ENCODE measurements at regions of chr15 and their contacts with region 1.

Region 1: GRCh38 chr15:52256366-52256765 is 39.2 kb downstream of the MYO5C start:
- DNase-seq: peak; percentile 37 to 72
- ATAC-seq: peak; percentile 32 to 79 (median 52)
- H3K4me3 ChIP-seq: peak overlapping the region in 3 of 10 donors; percentile 9 to 15 (median 9)
- H3K27ac ChIP-seq: no peak overlapping the region
- H3K4me1 ChIP-seq: peaks cover 0 to 51% (median 18%) of the 10 kb centered on the region in 9 donors
- H3K27me3 ChIP-seq: no peaks in the 10 kb centered on the region
- CTCF ChIP-seq: peak; percentile 73 to 82 (median 78)

Region 2: DNA sequence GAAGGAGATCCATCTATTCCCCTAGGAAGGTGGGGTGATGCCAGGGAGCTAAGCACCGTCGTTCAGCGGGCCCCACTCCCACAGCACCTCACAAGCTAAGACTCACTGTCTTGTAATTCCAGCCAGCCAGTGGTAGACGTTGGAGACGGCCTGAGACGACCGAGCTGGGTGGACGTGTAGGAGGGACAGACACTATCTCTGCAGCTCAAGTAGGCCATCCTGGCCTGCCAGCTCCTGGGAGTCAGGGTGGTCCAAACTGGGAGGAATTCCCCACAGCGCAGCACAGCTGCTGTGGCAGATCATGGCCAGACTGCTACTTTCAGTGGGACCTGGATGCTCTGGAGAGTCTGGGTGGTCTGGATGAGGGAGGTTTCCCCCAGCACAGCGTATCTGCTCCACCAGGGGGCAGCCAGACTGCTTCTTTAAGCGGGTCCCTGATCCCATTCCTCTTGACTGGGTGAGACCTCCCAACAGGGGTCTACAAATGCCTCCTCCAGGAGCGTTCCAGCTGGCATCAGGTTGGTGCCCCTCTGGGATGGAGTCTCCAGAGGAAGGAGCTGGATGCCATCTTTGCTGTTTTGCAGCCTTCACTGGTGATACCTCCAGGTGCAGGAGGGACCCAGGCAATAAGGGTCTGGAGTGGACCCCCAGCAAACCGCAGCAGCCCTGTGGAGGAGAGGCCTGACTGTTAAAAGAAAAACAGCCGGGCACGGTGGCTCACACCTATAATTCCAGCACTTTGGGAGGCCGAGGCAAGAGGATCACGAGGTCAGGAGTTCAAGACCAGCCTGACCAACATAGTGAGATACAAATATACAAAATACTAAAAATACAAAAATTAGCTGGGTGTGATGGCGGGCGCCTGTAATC is 92.8 kb before region 1 on chr15:
- intact Hi-C with region 1: no loop called
- DNase-seq: no peak
- ATAC-seq: peak in 1 of 8 donors; percentile 30
- H3K4me3 ChIP-seq: no peak overlapping the region
- H3K27ac ChIP-seq: no peak overlapping the region
- H3K4me1 ChIP-seq: no peaks in the 10 kb centered on the region
- H3K27me3 ChIP-seq: no peaks in the 10 kb centered on the region
- CTCF ChIP-seq: peak in 4 of 9 donors; percentile 7 to 25 (median 16)

Region 3: DNA sequence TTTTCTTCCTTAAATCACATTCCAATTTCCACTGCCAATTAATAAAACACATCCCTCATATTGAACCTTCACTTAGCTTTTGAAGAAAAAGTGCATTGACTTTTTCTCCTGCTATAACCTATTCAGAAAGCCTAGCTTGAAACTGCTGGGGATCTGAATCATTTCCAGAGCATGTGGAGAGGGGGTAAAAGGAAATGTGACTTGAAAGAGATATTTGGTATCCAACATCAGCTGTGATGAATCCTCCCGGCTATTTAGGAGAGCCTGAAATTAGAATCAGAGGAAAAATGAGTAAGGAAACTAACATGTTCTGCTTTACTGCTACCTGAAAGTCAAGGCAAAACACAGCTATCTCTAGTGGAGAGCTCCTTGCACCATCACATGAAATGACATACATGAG is 62.6 kb before region 1 on chr15:
- intact Hi-C with region 1: no loop called
- DNase-seq: no peak
- ATAC-seq: no peak
- H3K4me3 ChIP-seq: no peak overlapping the region
- H3K27ac ChIP-seq: no peak overlapping the region
- H3K4me1 ChIP-seq: no peaks in the 10 kb centered on the region
- H3K27me3 ChIP-seq: no peaks in the 10 kb centered on the region
- CTCF ChIP-seq: no peak

Region 4: GRCh38 chr15:52337198-52337853 is 81.0 kb after region 1 on chr15:
- intact Hi-C with region 1: loop called in 3 of 10 experiments (anchors 5 to 10 kb)
- DNase-seq: no peak
- ATAC-seq: peak in 6 of 8 donors; percentile 22 to 71 (median 58)
- H3K4me3 ChIP-seq: no peak overlapping the region
- H3K27ac ChIP-seq: peak overlapping the region in 8 of 10 donors; percentile 7 to 59 (median 43)
- H3K4me1 ChIP-seq: peaks cover 0 to 15% (median 4%) of the 10 kb centered on the region in 9 donors
- H3K27me3 ChIP-seq: no peaks in the 10 kb centered on the region
- CTCF ChIP-seq: no peak

Region 5: DNA sequence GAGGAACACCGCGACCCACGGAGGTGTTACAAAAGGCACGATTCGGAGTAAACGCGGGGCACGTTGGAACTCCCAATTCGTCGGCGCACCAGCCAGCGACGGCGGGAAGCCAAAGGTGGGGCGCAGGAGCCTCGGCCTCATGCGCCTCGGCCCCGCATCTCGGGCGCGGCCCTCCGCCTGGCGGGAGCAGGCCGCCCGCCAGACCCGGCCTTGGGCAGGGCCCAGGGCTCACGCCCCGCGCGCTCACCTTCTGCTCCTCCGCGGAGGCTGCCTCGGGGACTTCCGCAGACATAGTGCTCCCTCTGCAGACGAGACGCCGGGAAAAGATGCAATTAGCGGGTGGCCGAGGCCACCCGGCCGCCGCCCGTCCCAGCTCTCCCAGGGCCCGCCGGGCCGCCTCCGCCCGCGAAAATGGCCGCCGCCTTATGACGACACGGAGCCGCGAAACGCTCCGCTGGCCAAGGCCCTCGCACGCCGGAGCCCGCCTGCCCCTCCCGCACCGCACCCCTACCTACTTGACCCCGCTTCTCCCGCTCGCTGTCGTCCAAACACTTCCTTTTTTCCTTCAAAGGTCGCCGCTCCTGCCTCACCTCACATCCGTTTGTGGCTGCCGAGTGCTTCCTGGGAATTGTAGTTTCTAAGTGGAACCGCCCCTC is 312.4 kb after region 1 on chr15 and contains the start of gene ARPP19:
- intact Hi-C with region 1: loop called in 3 of 10 experiments (anchors 5 to 10 kb)
- DNase-seq: peak; percentile 86 to 90
- ATAC-seq: peak; percentile 89 to 94 (median 92)
- H3K4me3 ChIP-seq: peak within 1 kb of the TSS; percentile 45 to 92 (median 75)
- H3K27ac ChIP-seq: peak within 1 kb of the TSS; percentile 69 to 96 (median 93)
- H3K4me1 ChIP-seq: peaks cover 3 to 46% (median 41%) of the 10 kb centered on the region in 9 donors
- H3K27me3 ChIP-seq: no peaks in the 10 kb centered on the region
- CTCF ChIP-seq: peak in 5 of 9 donors; percentile 23 to 45 (median 40)
- total RNA-seq, gene ARPP19: 121 to 166 (median 147) TPM